ENCODE measurements at regions of chr11 and their contacts with region 1.

Region 1: DNA sequence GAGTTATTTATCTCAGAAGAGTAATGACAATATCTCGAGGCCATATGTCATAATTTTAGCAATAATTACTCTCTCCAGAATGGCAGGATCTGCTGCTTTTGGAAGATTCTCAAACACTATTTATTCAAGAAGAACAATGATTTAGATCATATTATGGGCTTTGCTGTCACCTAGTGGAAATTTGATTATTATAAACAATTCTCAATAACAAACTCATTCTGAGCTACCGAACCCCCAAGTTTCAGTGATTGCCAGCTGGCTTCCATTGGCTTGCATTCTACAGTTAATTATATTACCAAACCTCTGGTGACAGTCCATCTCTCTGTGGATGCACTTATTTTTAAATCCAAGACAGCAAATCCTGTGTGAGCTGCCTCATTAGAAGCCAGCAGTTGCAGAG is 27.9 kb upstream of the SLC36A4 start:
- H3K4me3 ChIP-seq: no peak overlapping the region
- H3K27ac ChIP-seq: no peak overlapping the region
- H3K4me1 ChIP-seq: no peaks in the 10 kb centered on the region
- CTCF ChIP-seq: no peak

Region 2: GRCh38 chr11:92941676-92942571 is 283.7 kb before region 1 on chr11:
- CTCF ChIA-PET with region 1: interaction called, 10 read pairs
- POLR2A ChIA-PET with region 1: no interaction called
- H3K4me3 ChIP-seq: no peak overlapping the region
- H3K27ac ChIP-seq: no peak overlapping the region
- H3K4me1 ChIP-seq: no peaks in the 10 kb centered on the region
- CTCF ChIP-seq: no peak

Measured in HEK293 (cell line).